HEK293 (cell line): ENCODE measurements at regions of chr5 and their contacts with region 1.

Region 1: DNA sequence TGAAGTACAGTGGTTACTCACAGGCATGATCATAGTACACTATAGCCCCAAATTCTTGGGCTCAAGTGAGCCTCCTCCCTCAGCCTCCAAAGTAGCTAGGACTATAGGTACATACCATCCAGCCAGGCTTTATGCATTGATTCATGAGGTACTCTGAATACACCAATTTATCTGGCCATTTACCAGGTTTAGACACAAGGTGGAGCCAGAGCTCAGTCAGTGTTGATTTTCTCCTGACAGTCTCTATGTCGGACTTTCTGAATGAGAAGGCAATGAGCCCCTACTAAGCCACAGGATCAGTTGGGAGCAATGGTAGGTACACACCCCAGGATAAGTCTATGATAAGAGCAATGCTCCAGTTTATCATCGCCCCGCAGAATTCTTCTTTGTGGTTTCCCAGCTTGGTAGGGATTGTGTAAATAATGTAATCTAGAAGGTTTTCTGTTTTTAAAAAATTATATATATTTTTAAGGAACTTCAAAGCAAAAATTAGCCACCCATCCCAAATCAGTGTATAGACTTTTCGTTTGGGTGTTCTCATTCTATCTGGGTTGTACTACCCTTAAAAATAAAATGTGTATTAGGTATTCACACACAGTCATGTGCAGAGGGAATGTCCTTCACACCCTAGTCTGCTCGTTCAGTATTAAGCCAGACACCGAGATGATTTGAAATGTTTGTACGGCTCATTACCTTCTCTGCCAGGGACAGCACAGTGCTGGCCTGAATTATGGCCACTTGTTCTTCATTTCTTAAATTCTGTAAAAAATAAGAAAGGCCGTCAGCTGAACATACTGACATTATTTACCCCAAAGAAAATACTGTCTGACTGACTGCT is 118.4 kb upstream of the DPYSL3 start:
- H3K4me3 ChIP-seq: no peak overlapping the region
- H3K27ac ChIP-seq: no peak overlapping the region
- H3K4me1 ChIP-seq: no peaks in the 10 kb centered on the region
- CTCF ChIP-seq: peak; percentile 61

Region 2: GRCh38 chr5:147613359-147613758 is 14.9 kb before region 1 on chr5:
- CTCF ChIA-PET with region 1: interaction called, 11 read pairs
- POLR2A ChIA-PET with region 1: no interaction called
- H3K4me3 ChIP-seq: no peak overlapping the region
- H3K27ac ChIP-seq: no peak overlapping the region
- H3K4me1 ChIP-seq: peaks cover 5% of the 10 kb centered on the region; the same call in 1 of the 2 replicates
- CTCF ChIP-seq: no peak

Region 3: GRCh38 chr5:147639321-147639720 is 11.0 kb after region 1 on chr5:
- CTCF ChIA-PET with region 1: interaction called, 21 read pairs
- POLR2A ChIA-PET with region 1: no interaction called
- H3K4me3 ChIP-seq: no peak overlapping the region
- H3K27ac ChIP-seq: no peak overlapping the region
- H3K4me1 ChIP-seq: no peaks in the 10 kb centered on the region
- CTCF ChIP-seq: no peak